HCT116 (cell line): ENCODE measurements at regions of chr7 and their contacts with region 1.

Region 1: DNA sequence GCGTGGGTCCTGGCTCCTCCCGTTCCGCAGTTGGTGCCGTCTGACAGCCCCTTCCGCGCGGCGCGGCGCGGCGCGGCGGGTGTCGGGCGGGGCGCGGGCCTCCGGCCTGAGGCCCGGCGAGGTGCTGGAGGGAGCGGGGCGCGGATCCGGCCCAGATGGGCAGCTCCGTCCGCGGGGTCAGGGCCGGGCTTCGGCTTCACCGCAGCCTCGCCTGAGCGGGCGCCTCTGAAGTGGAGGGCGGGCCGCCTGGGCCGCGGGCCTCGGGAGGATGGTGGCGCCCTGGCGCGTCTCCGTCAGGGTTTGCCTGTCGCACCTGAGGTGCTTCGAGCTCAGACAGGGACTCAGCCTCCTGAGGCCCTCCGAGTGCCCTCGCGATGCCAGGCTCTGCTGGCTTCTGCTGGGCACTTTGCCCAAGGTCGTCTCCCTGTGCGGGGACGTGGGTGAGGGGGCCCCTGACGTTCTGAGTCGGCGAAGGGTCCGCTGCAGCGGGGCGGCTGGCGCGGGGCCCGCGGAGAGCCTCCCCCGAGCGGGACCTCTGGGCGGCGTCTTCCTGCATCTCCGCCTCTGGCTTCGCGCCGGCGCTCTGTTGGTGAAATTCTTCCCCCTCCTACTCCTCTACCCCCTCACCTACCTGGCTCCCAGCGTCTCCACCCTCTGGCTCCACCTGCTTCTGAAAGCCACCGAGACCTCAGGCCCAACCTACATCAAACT is 473 bp downstream of the ADCK2 start:
- DNase-seq: no peak
- ATAC-seq: peak; percentile 78
- H3K4me3 ChIP-seq: peak overlapping the region; percentile 52 to 66
- H3K27ac ChIP-seq: peak overlapping the region; percentile 87
- H3K4me1 ChIP-seq: peaks cover 9 to 27% of the 10 kb centered on the region in 2 experiments
- H3K27me3 ChIP-seq: no peaks in the 10 kb centered on the region
- CTCF ChIP-seq: no peak
- POLR2A ChIP-seq: peak; percentile 25
- RAD21 ChIP-seq: no peak

Region 2: DNA sequence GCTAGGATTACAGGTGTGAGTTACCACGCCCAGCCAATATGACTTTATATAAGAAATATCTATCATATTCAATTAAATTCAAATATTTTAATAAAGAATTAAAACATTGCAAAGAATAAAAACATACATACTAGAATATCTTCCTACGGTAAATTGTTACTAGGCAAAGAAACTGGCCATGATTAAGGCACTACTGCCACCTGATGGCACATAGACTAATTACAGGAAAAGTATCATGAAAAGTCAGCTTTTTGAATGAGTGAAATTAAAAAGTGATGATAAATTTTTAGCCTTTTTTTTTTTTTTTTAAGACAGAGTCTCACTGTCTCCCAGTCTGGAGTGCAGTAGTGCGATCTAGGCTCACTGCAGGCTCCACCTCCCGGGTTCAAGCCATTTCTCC is 310.6 kb after region 1 on chr7:
- CTCF ChIA-PET with region 1: no interaction called
- POLR2A ChIA-PET with region 1: no interaction called
- RAD21 ChIA-PET with region 1: no interaction called
- intact Hi-C with region 1: loop called (anchors 1 kb)
- DNase-seq: peak; percentile 8
- ATAC-seq: no peak
- H3K4me3 ChIP-seq: no peak overlapping the region
- H3K27ac ChIP-seq: no peak overlapping the region
- H3K4me1 ChIP-seq: no peaks in the 10 kb centered on the region
- H3K27me3 ChIP-seq: no peaks in the 10 kb centered on the region
- CTCF ChIP-seq: peak; percentile 27 to 56 (median 42); a peak in 4 of 6 replicates
- POLR2A ChIP-seq: no peak
- RAD21 ChIP-seq: peak; percentile 65

Region 3: GRCh38 chr7:141220263-141220880 is 547.2 kb after region 1 on chr7:
- CTCF ChIA-PET with region 1: interaction called, 4 read pairs
- POLR2A ChIA-PET with region 1: no interaction called
- RAD21 ChIA-PET with region 1: no interaction called
- intact Hi-C with region 1: loop called (anchors 5 kb)
- DNase-seq: peak; percentile 7
- ATAC-seq: peak; percentile 92
- H3K4me3 ChIP-seq: no peak overlapping the region
- H3K27ac ChIP-seq: no peak overlapping the region
- H3K4me1 ChIP-seq: no peaks in the 10 kb centered on the region
- H3K27me3 ChIP-seq: peaks cover 6% of the 10 kb centered on the region; the same call in 1 of the 2 replicates
- CTCF ChIP-seq: peak; percentile 47 to 55 (median 54); a peak in 5 of 6 replicates
- POLR2A ChIP-seq: no peak
- RAD21 ChIP-seq: peak; percentile 80

Region 4: DNA sequence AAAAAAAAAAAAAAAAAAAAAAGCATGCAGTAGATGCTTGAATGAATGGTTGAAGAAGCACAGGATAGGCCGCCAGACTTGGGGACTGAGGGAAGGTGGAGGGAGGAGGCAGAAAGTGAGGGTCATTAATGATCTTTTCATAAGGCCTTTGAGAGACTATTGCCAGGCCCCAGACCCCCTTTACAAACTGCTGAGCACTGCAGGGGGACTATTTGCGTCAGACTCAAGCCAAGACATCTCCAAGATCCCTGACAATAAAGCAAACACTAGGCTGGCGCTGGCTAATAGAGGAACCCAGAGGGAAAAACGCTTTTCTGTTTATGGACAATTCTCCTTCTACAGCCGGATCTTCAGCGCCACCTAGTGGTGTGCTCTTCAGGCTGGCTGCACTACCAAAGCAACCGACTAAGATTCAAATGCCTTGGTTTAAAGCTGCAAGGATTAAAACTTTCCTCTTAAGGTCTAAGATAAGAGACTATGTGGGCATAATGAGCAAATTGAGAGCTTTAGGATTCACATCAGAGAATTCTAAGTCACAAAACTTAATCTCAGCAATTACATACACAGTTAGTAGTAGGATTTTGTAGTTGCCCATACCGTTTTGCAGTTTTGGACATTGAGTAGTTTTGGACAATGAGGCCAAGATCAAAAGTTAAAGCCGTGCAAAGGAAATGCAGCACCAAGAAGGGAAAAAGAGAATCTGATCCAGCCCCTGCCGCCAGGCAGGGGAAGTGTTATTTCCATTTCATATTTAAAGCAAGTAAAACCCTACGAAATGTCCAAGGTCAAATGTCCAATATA is 860.1 kb after region 1 on chr7:
- CTCF ChIA-PET with region 1: no interaction called
- POLR2A ChIA-PET with region 1: no interaction called
- RAD21 ChIA-PET with region 1: no interaction called
- intact Hi-C with region 1: loop called (anchors 5 kb)
- DNase-seq: peak; percentile 48
- ATAC-seq: peak; percentile 89
- H3K4me3 ChIP-seq: no peak overlapping the region
- H3K27ac ChIP-seq: no peak overlapping the region
- H3K4me1 ChIP-seq: no peaks in the 10 kb centered on the region
- H3K27me3 ChIP-seq: peaks cover 13% of the 10 kb centered on the region; the same call in 1 of the 2 replicates
- CTCF ChIP-seq: peak; percentile 73 to 98 (median 96)
- POLR2A ChIP-seq: no peak
- RAD21 ChIP-seq: peak; percentile 89